Posterior vena cava (tissue), 2 donors: ENCODE measurements at regions of chr3 and their contacts with region 1.

Region 1: DNA sequence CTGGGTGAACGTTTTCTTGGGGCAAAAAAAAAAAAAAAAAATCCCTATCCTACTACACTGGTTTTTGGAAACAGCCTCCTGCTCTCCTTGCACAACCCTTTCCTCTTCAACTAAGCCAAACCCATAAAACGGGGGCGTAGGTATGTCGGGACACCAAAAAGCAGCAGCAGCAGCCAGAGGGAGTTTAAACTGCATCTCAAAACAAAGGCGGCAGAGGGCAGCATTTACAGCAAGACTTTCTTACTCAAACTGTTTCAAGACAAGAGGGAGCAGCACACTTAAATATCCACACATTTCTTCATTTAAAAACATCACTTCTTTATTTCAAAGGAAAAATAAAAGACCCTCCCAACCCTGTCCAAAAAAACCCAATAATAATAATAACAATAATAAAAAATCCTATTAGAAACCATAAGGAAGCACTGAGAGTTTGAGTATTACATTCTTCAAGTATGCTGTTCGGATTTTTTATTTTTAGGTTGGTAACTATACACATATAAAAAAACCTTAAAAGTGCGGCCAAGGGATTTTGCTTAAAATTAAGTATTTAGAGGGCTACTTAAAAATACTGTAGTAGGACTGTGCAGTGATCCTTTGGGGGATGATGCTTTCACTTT is 43.9 kb upstream of the PLXND1 start:
- DNase-seq: peak; percentile 87

Region 2: GRCh38 chr3:129461022-129461421 is 189.3 kb before region 1 on chr3:
- intact Hi-C with region 1: no loop called
- DNase-seq: no peak

Region 3: GRCh38 chr3:129809297-129809696 is 158.9 kb after region 1 on chr3:
- intact Hi-C with region 1: loop called in 1 of 2 experiments (anchors 10 kb)
- DNase-seq: no peak